Left cardiac atrium (tissue), 4 donors: ENCODE measurements at regions of chr2 and their contacts with region 1.

Region 1: DNA sequence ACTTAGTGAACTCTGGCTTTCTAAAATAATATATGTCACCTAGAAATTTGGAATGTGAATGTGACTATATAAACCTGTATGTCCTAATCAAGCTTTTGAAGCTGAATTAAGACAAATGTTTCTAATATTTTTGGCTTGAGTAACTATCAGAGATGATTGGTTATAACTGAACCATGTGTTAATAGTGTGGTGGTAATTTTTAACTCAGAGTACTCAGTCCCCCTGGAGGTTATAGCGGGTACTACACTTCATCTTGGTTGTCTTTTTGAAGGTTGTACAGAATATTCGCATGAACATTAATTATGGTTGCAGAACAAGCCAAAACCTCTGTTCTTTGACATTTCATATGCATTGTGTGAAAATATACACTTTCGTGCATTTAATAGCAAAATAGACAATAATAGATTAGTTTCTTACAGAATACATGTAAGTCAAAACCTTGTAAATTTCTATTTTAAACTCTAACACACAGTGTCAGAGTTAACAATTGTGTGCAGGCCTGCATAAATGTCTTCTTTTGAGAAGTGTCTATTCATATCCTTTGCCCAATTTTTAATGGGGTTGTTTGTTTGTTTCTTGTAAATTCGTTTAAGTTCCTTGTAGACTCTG is 86.0 kb downstream of the OSBPL6 start:
- DNase-seq: no peak
- ATAC-seq: peak; percentile 22 to 45

Region 2: DNA sequence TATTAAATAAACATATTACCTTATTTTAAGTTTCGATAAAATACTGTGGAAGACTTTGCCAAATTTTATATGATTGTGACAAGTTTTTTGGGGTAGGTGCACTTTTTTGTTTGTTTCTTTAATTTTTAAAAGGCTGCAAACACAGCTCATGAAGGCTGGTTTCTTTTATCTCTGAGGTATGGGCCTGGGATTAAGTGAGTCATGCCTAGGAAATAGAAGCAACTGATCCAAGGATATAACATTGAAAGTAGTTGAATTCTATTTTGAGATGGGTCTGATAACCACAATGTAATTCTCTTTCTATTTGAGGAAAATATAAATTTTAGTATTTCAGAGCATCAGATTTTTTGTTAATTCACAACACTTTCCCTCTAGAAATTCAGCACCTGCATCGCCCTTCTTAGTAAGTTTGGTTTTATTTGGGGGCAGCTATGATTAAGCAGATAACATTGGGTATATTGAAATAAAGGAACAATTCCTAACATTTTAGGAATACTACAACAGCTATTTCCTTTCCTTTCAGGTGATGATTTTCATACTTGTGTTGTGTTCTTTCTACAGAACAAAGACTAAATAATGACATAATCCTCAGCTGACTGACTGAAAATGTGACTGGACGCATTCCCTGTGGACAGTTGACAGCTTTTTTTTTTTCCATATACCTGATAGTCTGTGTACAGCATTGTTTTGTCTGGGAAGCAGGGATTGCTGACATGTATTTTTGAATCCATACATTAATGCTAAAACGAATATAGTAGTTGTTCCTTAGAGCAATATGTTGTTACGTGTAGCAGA is 151.3 kb before region 1 on chr2:
- intact Hi-C with region 1: loop called (anchors 5 to 10 kb)
- DNase-seq: no peak
- ATAC-seq: no peak

Region 3: GRCh38 chr2:178136321-178137025 is 143.9 kb before region 1 on chr2:
- intact Hi-C with region 1: loop called (anchors 5 to 10 kb)
- DNase-seq: no peak
- ATAC-seq: no peak

Region 4: DNA sequence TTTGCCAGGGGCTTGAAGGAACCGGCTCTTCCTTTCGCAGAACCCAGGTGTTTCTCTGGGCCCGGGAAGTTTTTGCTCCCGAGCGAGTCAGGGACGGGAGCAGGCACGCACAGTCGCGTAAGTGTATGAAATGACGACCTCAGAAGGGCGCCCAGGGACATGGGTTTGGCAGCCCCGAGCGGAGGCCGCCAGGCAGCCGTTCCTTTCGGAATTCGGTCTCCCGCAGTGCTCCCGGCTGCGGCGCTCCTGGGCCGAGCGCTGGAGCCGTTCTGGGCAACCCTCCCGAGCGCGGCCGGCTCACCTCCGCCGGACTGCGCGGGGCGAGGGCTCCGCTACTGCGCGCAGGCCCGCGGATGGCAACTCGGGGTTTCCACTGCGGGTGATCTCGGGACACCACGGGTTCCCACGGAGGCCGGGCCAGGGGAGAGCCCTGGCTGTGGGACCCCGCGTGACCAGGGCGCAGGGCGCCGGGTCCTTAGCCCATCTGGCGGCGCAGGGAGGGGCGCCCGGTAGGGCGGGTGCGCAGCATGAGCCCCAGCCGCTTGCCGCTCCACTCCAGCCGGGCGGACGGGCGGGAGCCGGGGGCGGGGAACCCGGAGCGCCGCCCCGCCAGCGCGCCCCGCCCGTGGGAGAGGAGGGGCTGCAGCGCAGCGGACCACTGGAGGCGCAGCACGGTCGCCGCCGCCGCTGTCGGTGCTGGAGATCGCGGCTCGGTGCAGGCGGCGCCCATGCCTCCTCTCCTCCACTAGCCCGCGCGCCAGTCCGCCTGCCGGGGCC is 86.3 kb before region 1 on chr2 and contains the start of gene OSBPL6:
- intact Hi-C with region 1: loop called in 1 of 2 experiments (anchors 10 kb)
- DNase-seq: peak; percentile 87
- ATAC-seq: peak; percentile 96 to 98
- total RNA-seq, gene OSBPL6: 7.0 to 12.2 TPM